ENCODE measurements at regions of chr6 and their contacts with region 1.

Region 1: DNA sequence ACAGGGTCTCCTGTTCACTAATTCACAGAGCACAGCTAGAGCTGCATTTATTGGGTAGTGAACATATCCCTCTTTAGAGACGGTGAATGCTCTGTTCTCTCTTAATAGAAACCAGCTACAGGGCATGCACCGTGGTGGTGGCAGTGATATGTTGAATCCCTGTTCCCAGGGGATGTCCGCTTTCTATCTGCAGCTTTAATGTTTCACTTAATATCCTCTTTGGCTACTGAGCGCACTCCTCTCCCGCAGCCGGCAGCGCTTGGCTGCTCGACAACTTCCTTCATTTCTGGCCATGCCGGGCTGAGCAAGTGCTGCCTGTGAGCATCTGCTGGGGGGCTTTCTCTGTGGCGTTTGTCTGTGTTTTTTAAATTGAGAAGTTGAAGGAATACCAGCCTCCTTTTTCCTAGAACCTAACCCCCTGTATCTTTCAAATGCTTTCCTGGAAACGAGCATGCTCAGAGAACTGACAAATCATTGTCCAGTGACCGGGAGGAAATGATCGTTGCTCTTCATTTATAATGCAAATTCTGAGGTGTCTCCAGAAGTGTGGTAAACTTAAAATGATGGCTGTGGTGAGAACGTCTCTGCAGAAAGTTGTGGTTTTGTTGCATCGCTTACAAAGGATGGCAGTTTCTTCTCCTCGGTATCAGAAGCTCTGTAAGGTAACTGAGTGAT is 297.9 kb downstream of the UTRN start:
- DNase-seq: peak in 8 of 9 experiments; percentile 7 to 76 (median 32)
- ATAC-seq: peak; percentile 86
- H3K4me3 ChIP-seq: peak overlapping the region; percentile 31 to 42
- H3K4me3 Mint-ChIP-seq: peak overlapping the region; percentile 86
- H3K27ac ChIP-seq: peak overlapping the region; percentile 14 to 47
- H3K27ac Mint-ChIP-seq: peak overlapping the region; percentile 90
- H3K4me1 ChIP-seq: peaks cover 21% of the 10 kb centered on the region
- H3K4me1 Mint-ChIP-seq: peaks cover 35% of the 10 kb centered on the region
- H3K27me3 ChIP-seq: no peaks in the 10 kb centered on the region
- H3K27me3 Mint-ChIP-seq: no peaks in the 10 kb centered on the region
- CTCF ChIP-seq: no peak

Region 2: DNA sequence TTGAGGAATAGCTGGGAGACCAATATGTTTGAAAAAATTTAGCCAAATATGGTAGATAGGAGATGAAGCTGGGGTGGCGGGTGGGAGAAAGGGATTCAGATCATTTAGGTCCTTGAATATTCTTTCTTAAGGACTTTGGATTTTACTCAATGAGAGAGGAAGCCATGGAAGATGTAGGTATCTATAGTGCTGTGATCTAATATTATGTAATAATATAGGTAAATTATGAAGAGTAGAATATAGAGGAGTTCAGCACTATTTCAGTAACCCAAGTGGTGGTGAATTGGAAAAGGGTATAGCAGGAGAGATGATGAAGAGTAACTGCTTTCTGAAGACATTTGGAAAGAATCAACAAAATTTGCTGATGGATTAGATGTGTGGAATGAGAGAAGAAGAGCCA is 119.7 kb after region 1 on chr6:
- CTCF ChIA-PET with region 1: no interaction called
- POLR2A ChIA-PET with region 1: no interaction called
- intact Hi-C with region 1: loop called in 1 of 2 experiments (anchors 10 kb)
- DNase-seq: no peak
- ATAC-seq: no peak
- H3K4me3 ChIP-seq: no peak overlapping the region
- H3K4me3 Mint-ChIP-seq: no peak overlapping the region
- H3K27ac ChIP-seq: no peak overlapping the region
- H3K27ac Mint-ChIP-seq: no peak overlapping the region
- H3K4me1 ChIP-seq: peaks cover under 1% of the 10 kb centered on the region
- H3K4me1 Mint-ChIP-seq: peaks cover 2% of the 10 kb centered on the region
- H3K27me3 ChIP-seq: no peaks in the 10 kb centered on the region
- H3K27me3 Mint-ChIP-seq: no peaks in the 10 kb centered on the region
- CTCF ChIP-seq: no peak

Region 3: DNA sequence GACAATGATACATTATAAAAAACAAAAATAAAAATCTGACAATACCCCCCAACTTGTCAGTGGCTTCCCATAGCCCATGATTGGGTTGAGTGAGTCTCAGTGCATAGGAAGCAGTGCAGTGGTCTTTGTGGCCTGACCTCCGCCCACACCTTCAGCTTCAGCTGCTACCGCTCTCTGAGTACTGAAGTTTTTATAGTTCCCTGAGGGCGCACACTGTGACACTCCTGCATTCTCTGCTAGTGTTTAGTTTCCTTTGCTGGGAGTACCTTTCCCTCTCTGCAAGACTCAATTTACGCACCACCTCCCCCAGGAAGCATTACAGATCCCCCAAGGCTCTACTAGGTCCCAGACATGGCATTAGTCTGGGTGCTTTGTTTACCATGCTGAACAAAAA is 143.1 kb after region 1 on chr6:
- CTCF ChIA-PET with region 1: no interaction called
- POLR2A ChIA-PET with region 1: no interaction called
- intact Hi-C with region 1: no loop called
- DNase-seq: peak in 7 of 9 experiments; percentile 5 to 52 (median 26)
- ATAC-seq: peak; percentile 69
- H3K4me3 ChIP-seq: no peak overlapping the region
- H3K4me3 Mint-ChIP-seq: peak overlapping the region; percentile 33
- H3K27ac ChIP-seq: no peak overlapping the region
- H3K27ac Mint-ChIP-seq: peak overlapping the region; percentile 45
- H3K4me1 ChIP-seq: peaks cover 12% of the 10 kb centered on the region
- H3K4me1 Mint-ChIP-seq: peaks cover 39% of the 10 kb centered on the region
- H3K27me3 ChIP-seq: no peaks in the 10 kb centered on the region
- H3K27me3 Mint-ChIP-seq: no peaks in the 10 kb centered on the region
- CTCF ChIP-seq: no peak

Region 4: GRCh38 chr6:144835322-144835973 is 252.4 kb after region 1 on chr6:
- CTCF ChIA-PET with region 1: no interaction called
- POLR2A ChIA-PET with region 1: no interaction called
- intact Hi-C with region 1: loop called in 1 of 2 experiments (anchors 10 kb)
- DNase-seq: no peak
- ATAC-seq: no peak
- H3K4me3 ChIP-seq: no peak overlapping the region
- H3K4me3 Mint-ChIP-seq: no peak overlapping the region
- H3K27ac ChIP-seq: no peak overlapping the region
- H3K27ac Mint-ChIP-seq: peak overlapping the region; percentile 14
- H3K4me1 ChIP-seq: no peaks in the 10 kb centered on the region
- H3K4me1 Mint-ChIP-seq: no peaks in the 10 kb centered on the region
- H3K27me3 ChIP-seq: no peaks in the 10 kb centered on the region
- H3K27me3 Mint-ChIP-seq: no peaks in the 10 kb centered on the region
- CTCF ChIP-seq: no peak

Region 5: DNA sequence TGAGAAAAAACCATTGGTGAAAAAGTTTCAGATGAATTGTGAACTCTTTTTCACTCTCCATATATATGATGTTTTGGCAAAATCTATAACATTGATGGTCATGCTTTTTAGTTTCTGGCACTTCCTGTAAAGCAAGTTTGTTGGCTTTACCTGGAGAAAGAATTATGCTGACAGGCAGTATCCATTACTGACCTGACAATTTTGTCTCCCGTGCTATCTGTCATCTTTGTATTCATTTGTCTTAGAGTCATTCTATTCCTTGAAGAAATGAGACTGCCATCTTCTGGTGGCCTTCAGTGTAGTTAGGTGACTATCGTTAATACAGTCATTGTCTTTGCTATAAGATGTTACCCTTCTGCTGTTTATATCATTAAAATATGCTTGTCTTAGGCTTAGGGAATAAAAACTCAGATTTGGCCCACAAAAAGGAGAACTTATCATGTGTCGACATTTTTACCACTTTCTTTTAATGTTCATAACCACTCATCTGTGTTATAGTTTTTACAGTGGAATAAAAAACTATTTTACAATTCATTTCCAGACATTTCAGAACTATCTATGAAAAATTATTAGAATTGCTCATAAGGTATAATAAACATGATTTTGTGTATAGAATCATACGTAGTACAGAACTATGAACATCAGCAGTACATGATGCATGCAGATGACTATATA is 445.2 kb after region 1 on chr6:
- CTCF ChIA-PET with region 1: no interaction called
- POLR2A ChIA-PET with region 1: no interaction called
- intact Hi-C with region 1: loop called (anchors 1 to 5 kb)
- DNase-seq: peak in 2 of 9 experiments; percentile 26 to 37
- ATAC-seq: no peak
- H3K4me3 ChIP-seq: no peak overlapping the region
- H3K4me3 Mint-ChIP-seq: no peak overlapping the region
- H3K27ac ChIP-seq: no peak overlapping the region
- H3K27ac Mint-ChIP-seq: no peak overlapping the region
- H3K4me1 ChIP-seq: no peaks in the 10 kb centered on the region
- H3K4me1 Mint-ChIP-seq: peaks cover 2% of the 10 kb centered on the region
- H3K27me3 ChIP-seq: peaks cover 0 to 2% of the 10 kb centered on the region in 2 experiments
- H3K27me3 Mint-ChIP-seq: peaks cover 9% of the 10 kb centered on the region
- CTCF ChIP-seq: no peak

Region 6: GRCh38 chr6:145633981-145634627 is 1051.0 kb after region 1 on chr6:
- CTCF ChIA-PET with region 1: no interaction called
- POLR2A ChIA-PET with region 1: no interaction called
- intact Hi-C with region 1: loop called in 1 of 2 experiments (anchors 2 kb)
- DNase-seq: peak; percentile 53 to 81 (median 71)
- ATAC-seq: peak; percentile 71
- H3K4me3 ChIP-seq: no peak overlapping the region
- H3K4me3 Mint-ChIP-seq: no peak overlapping the region
- H3K27ac ChIP-seq: no peak overlapping the region
- H3K27ac Mint-ChIP-seq: no peak overlapping the region
- H3K4me1 ChIP-seq: no peaks in the 10 kb centered on the region
- H3K4me1 Mint-ChIP-seq: peaks cover 7% of the 10 kb centered on the region
- H3K27me3 ChIP-seq: no peaks in the 10 kb centered on the region
- H3K27me3 Mint-ChIP-seq: no peaks in the 10 kb centered on the region
- CTCF ChIP-seq: peak; percentile 79

Region 7: GRCh38 chr6:145887969-145888368 is 1304.9 kb after region 1 on chr6:
- CTCF ChIA-PET with region 1: no interaction called
- POLR2A ChIA-PET with region 1: no interaction called
- intact Hi-C with region 1: loop called in 1 of 2 experiments (anchors 10 kb)
- DNase-seq: peak in 5 of 9 experiments; percentile 2 to 40 (median 21)
- ATAC-seq: no peak
- H3K4me3 ChIP-seq: no peak overlapping the region
- H3K4me3 Mint-ChIP-seq: no peak overlapping the region
- H3K27ac ChIP-seq: no peak overlapping the region
- H3K27ac Mint-ChIP-seq: no peak overlapping the region
- H3K4me1 ChIP-seq: no peaks in the 10 kb centered on the region
- H3K4me1 Mint-ChIP-seq: no peaks in the 10 kb centered on the region
- H3K27me3 ChIP-seq: no peaks in the 10 kb centered on the region
- H3K27me3 Mint-ChIP-seq: no peaks in the 10 kb centered on the region
- CTCF ChIP-seq: peak; percentile 25